ENCODE measurements at regions of chr6 and their contacts with region 1.

Region 1: GRCh38 chr6:84227434-84228197 is at the start of gene CEP162:
- DNase-seq: peak; percentile 79
- ATAC-seq: peak; percentile 98
- H3K4me3 ChIP-seq: peak within 1 kb of the TSS; percentile 95
- H3K27ac ChIP-seq: peak within 1 kb of the TSS; percentile 51
- H3K4me1 ChIP-seq: no peaks in the 10 kb centered on the region
- H3K27me3 ChIP-seq: no peaks in the 10 kb centered on the region
- CTCF ChIP-seq: peak; percentile 59 to 69 (median 60)
- EP300 ChIP-seq: no peak
- POLR2A ChIP-seq: peak; percentile 52
- RAD21 ChIP-seq: peak; percentile 28
- polyA plus RNA-seq, gene CEP162: 2.7 to 2.8 TPM

Region 2: DNA sequence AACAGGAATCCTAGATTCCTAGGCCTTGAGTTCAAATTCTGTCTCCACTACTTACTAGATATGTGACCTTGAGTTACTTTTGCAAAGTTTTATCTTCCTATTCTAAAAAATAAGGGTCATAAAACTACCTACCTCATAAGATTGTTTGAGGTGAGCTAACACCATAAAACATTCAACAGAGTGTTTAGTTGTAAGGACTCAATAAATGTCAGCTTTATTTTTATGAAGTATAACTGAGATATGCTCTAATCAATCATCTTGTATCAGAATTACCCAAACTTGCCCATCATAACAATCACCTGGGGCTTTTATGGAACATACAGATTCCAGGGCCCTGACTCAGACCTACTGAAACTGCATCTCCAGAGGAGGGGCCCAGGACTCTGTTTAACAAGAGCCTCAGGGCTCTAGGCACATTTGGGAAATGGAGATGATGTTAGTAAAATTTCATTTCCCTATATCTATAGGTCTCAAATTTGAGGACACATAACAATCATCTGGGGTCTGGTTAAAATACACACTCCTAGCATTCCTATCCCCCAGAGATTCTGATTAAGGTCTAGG is 229.5 kb before region 1 on chr6:
- CTCF ChIA-PET with region 1: no interaction called
- POLR2A ChIA-PET with region 1: no interaction called
- RAD21 ChIA-PET with region 1: no interaction called
- SMC1A ChIA-PET with region 1: no interaction called
- in situ Hi-C with region 1: no loop called
- intact Hi-C with region 1: no loop called
- DNase-seq: no peak
- ATAC-seq: no peak
- H3K4me3 ChIP-seq: no peak overlapping the region
- H3K27ac ChIP-seq: no peak overlapping the region
- H3K4me1 ChIP-seq: no peaks in the 10 kb centered on the region
- H3K27me3 ChIP-seq: no peaks in the 10 kb centered on the region
- CTCF ChIP-seq: no peak
- EP300 ChIP-seq: no peak
- POLR2A ChIP-seq: no peak
- RAD21 ChIP-seq: no peak

Region 3: DNA sequence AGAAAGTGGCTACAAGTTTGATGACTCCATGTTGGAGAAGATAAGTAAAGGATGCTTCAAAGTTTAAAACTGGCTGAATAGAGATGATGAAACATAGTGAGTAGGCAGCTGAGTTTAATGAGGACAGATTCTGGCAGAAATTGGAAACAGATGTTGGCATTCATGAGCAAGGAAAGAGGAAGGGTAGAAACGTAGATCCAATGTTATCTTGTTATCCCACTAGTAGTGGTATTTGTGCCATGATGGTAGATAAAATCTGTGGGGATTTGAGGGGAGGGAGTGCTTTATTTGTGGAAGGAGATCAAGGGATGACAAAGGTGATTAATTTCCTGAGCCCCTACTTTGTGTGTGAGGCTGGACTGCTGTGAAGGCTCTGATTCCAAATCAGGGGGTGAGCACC is 124.6 kb before region 1 on chr6:
- CTCF ChIA-PET with region 1: no interaction called
- POLR2A ChIA-PET with region 1: no interaction called
- RAD21 ChIA-PET with region 1: no interaction called
- SMC1A ChIA-PET with region 1: no interaction called
- in situ Hi-C with region 1: no loop called
- intact Hi-C with region 1: no loop called
- DNase-seq: no peak
- ATAC-seq: no peak
- H3K4me3 ChIP-seq: no peak overlapping the region
- H3K27ac ChIP-seq: no peak overlapping the region
- H3K4me1 ChIP-seq: no peaks in the 10 kb centered on the region
- H3K27me3 ChIP-seq: no peaks in the 10 kb centered on the region
- CTCF ChIP-seq: no peak
- EP300 ChIP-seq: no peak
- POLR2A ChIP-seq: no peak
- RAD21 ChIP-seq: no peak

Region 4: DNA sequence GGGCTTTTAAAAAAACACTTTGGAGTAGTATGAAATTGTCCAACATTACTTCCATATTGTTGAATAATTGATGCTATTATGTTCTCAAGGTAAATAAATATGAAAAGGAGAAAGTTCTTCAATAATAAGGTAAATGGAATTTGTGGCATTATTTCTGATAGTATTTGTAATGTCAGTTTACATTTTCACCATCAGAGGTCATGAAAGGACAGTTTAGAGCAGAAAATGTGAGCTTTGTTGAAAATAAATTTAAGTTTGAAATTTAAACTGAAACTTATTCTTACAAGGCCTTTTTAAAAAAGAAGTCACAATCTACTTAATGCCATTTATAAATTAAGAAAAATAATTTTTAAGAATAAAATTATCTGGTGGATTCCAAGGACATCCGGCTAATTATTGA is 15.6 kb after region 1 on chr6:
- CTCF ChIA-PET with region 1: interaction called, 11 read pairs
- POLR2A ChIA-PET with region 1: no interaction called
- RAD21 ChIA-PET with region 1: interaction called, 3 read pairs
- SMC1A ChIA-PET with region 1: interaction called, 12 read pairs
- in situ Hi-C with region 1: no loop called
- intact Hi-C with region 1: no loop called
- DNase-seq: no peak
- ATAC-seq: no peak
- H3K4me3 ChIP-seq: no peak overlapping the region
- H3K27ac ChIP-seq: no peak overlapping the region
- H3K4me1 ChIP-seq: no peaks in the 10 kb centered on the region
- H3K27me3 ChIP-seq: no peaks in the 10 kb centered on the region
- CTCF ChIP-seq: no peak; a peak in 1 of 6 replicates
- EP300 ChIP-seq: no peak
- POLR2A ChIP-seq: no peak
- RAD21 ChIP-seq: peak; percentile 20; the same call in 1 of the 2 replicates